Colonic mucosa (tissue), 4 donors: ENCODE measurements at regions of chr7 and their contacts with region 1.

Region 1: GRCh38 chr7:3333861-3334260 is 32.8 kb downstream of the SDK1 start:
- DNase-seq: no peak
- H3K4me3 ChIP-seq: no peak overlapping the region
- H3K27ac ChIP-seq: no peak overlapping the region
- H3K4me1 ChIP-seq: no peaks in the 10 kb centered on the region
- H3K27me3 ChIP-seq: no peaks in the 10 kb centered on the region
- CTCF ChIP-seq: no peak

Region 2: GRCh38 chr7:3345699-3346481 is 12.0 kb after region 1 on chr7:
- intact Hi-C with region 1: loop called (anchors 2 kb)
- DNase-seq: no peak
- H3K4me3 ChIP-seq: no peak overlapping the region
- H3K27ac ChIP-seq: no peak overlapping the region
- H3K4me1 ChIP-seq: no peaks in the 10 kb centered on the region
- H3K27me3 ChIP-seq: no peaks in the 10 kb centered on the region
- CTCF ChIP-seq: no peak

Region 3: GRCh38 chr7:3358991-3359390 is 25.1 kb after region 1 on chr7:
- intact Hi-C with region 1: no loop called
- DNase-seq: no peak
- H3K4me3 ChIP-seq: no peak overlapping the region
- H3K27ac ChIP-seq: no peak overlapping the region
- H3K4me1 ChIP-seq: no peaks in the 10 kb centered on the region
- H3K27me3 ChIP-seq: no peaks in the 10 kb centered on the region
- CTCF ChIP-seq: no peak